Lower lobe of right lung (tissue), 2 donors: ENCODE measurements at regions of chr1 and their contacts with region 1.

Region 1: DNA sequence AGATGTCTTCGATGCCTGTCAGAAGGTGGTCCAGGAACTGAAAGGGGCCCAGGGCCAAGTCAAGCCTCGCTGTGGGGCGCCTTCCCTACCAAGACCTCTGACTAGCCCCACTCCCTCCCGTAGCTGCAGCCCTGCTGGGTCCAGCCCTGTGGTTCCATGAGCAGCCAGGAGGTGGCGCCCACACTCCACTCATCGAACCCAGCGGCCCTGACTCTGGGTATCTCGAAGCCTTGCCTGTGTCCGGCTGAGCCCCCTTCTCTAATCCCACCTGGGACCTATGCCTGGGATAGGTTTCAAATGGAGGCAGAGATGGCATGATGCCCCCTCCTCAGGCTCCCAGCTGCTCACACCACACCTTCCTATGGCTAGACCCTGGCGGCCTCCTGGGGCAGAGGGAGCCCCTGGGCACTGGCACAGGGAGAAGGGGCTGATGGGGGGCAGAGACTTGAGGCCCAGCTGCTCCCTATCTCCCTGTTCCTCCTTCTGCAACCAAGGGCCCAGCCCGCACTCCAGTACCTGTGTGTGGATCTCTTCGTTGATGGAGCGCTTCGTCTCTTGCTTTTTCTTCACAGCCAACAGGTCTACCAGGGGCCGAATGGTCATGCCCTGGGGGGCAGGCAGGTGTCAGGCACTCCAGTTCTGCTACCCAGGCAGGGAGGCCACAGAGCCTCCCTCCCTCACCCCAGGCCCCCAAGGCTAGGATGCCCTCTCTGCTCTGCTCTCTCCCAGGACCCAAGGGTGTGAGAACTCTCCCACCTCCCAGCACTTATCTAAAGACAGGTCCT is 52.0 kb downstream of the SLC9A1 start:
- DNase-seq: peak; percentile 83
- ATAC-seq: peak; percentile 51 to 72
- H3K4me3 ChIP-seq: no peak overlapping the region
- H3K27ac ChIP-seq: no peak overlapping the region
- H3K4me1 ChIP-seq: peaks cover 30% of the 10 kb centered on the region
- H3K27me3 ChIP-seq: no peaks in the 10 kb centered on the region
- CTCF ChIP-seq: peak; percentile 99

Region 2: DNA sequence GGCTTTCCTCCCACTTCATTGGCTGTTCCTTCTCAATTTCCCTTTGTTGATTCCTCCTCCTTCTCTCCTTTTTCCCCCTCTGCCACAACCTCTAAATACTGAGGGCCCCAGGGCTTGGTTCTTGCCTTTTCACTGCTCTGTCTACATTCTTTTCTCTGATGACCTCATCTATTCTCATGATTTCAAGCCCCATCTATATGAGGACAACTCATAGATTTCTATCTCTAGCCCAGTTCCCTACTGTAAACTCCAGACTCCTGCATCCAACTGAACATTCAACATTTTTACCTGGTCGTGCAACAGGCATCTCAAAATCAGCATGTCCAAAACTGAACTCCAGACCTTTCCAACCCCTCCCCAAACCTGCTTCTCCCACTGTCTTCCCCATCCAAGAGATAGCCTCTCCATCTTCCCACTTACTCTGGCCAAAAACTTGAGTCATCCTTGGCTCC is 63.5 kb after region 1 on chr1:
- intact Hi-C with region 1: no loop called
- DNase-seq: no peak
- ATAC-seq: no peak
- H3K4me3 ChIP-seq: no peak overlapping the region
- H3K27ac ChIP-seq: no peak overlapping the region
- H3K4me1 ChIP-seq: peaks cover 4% of the 10 kb centered on the region
- H3K27me3 ChIP-seq: no peaks in the 10 kb centered on the region
- CTCF ChIP-seq: no peak

Region 3: DNA sequence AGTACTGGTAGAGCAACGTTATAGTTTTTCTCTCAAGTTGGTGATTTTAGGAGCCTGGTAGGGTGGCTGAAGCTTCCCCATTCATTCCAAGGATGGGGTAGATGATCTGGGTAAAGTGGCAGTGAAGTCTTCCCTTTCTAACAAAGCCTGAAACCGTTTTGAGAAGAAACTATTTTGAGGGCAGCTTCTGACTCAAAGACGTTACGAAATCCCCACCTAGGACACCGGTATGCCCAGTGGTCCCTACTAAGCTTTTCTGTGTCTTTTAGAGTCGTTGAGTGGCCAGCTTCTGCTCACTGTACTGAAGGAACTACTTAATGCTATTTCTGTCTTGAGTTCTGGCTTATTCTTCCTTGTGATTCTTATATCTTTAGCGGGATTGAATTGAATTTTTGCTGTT is 132.9 kb after region 1 on chr1:
- intact Hi-C with region 1: no loop called
- DNase-seq: no peak
- ATAC-seq: no peak
- H3K4me3 ChIP-seq: peak overlapping the region; percentile 91
- H3K27ac ChIP-seq: peak overlapping the region; percentile 84
- H3K4me1 ChIP-seq: peaks cover 22% of the 10 kb centered on the region
- H3K27me3 ChIP-seq: no peaks in the 10 kb centered on the region
- CTCF ChIP-seq: no peak

Region 4: DNA sequence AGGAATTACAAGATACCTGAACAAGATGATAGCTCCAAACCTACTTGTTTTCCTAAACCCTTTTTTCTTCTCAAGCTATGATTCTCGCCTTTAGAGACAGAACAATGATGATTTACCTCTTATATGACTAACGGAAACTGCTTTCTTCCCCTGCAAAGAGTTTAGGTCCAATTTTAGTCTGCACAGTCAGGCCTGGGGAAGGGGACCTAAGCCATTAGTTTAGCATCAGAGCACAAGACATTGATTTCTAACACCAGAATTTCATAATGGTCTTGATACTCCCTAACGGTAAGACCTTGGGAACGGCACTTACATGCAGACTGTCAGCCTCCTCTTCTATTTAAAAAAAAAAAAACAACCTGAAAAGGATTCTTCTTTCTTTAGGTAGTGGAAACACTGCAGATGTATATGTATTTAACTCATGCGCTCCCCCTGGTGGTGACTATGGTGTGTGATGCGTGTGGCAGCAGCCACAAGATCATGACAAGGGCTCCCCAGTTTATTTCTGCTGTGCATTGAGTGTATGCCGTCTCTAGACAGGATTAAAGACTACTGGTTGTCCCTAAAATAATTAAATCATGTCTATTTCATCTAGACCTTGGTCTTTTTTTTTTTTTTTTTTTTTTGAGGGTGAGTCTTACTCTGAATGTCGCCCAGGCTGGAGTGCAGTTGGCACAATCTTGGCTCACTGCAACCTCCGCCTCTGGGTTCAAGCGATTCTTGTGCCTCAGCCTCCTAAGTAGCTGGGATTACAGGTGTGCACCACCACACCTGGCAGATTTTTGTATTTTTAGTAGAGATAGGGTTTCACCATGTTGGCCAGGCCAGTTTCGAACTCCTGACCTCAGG is 181.8 kb after region 1 on chr1:
- intact Hi-C with region 1: loop called (anchors 10 kb)
- DNase-seq: peak; percentile 87
- ATAC-seq: peak; percentile 94
- H3K4me3 ChIP-seq: no peak overlapping the region
- H3K27ac ChIP-seq: no peak overlapping the region
- H3K4me1 ChIP-seq: peaks cover 4% of the 10 kb centered on the region
- H3K27me3 ChIP-seq: no peaks in the 10 kb centered on the region
- CTCF ChIP-seq: peak; percentile 88